ENCODE measurements at regions of chr1 and their contacts with region 1.

Region 1: DNA sequence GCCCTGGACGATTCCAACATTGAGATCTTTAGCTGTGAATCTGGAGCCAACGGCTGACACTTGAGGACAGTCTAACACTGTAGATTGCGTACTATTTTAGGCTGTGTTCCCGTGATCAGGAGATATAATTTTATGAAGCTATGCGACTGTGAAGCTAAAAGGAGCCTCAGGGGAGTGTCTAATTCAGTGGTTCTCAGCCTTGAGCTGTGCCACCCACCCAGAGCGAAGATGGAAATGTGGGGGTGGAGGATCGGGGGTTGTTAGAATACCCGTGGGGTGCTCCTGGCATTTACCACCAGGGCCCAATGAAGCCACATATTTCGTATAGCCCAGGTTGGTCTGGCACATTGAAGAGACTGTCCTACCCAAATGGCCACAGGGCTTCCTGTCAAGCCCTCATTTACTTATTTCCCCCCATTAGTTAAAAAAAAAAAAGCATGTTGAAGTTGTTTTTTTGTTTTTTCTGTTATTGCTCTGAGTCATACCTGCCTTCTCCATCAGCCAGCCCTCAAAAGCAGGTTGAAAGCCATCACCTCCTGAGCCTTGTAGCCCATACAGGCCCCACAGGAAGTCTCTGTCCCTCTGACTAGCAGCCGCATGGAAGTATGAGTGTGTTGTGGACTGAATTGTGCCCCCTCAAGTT is 141.7 kb downstream of the GALNT2 start:
- DNase-seq: peak; percentile 64
- ATAC-seq: peak; percentile 91
- H3K4me3 Mint-ChIP-seq: no peak overlapping the region
- H3K27ac Mint-ChIP-seq: peak overlapping the region; percentile 84
- H3K4me1 Mint-ChIP-seq: peaks cover 47% of the 10 kb centered on the region
- H3K27me3 Mint-ChIP-seq: no peaks in the 10 kb centered on the region

Region 2: DNA sequence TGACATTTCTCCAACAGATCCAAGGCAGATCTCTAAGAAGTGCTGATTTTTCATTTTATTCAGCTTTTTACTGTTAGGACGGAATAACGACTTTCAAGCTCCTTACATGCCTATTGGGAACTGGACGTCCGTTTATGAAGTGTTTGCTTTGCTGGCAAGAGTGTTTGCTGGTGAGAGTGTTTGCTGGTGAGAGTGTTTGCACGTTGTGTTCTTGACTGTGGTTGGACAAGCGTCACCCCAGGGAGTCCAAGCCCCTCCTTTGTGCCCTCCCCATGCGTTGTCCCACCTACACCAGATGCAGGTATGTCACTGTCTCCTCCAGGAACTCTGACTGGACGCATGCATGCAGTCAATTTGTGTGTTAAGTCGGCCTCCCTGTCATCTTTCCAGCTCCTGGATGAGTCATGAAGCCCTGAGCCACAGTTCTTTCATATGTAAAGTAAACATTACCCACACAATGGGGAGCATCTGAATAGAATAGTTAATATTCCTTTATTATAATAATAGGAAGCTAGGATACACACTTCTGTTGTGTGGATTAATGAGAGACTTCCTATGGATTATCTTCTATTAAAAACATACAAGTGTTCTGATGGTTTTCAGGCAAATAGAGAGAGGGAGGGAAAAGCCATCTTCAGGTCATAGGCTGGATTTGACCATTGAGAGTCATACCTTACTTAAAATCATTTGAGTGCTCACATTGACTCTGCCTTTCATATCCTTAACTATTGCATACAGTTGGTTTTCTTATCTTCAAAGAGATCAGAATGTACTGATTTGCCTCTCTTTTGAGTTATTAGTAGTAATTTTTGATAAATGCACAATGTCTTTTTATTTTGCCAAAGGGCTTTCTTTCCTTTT is 22.5 kb before region 1 on chr1:
- CTCF ChIA-PET with region 1: no interaction called
- POLR2A ChIA-PET with region 1: no interaction called
- intact Hi-C with region 1: loop called in 1 of 2 experiments (anchors 2 kb)
- DNase-seq: peak; percentile 56
- ATAC-seq: peak; percentile 82
- H3K4me3 Mint-ChIP-seq: no peak overlapping the region
- H3K27ac Mint-ChIP-seq: peak overlapping the region; percentile 78
- H3K4me1 Mint-ChIP-seq: peaks cover 56% of the 10 kb centered on the region
- H3K27me3 Mint-ChIP-seq: no peaks in the 10 kb centered on the region